ENCODE measurements at regions of chr3 and their contacts with region 1.

Region 1: GRCh38 chr3:142279965-142280590 is 54.7 kb upstream of the GK5 start:
- DNase-seq: peak; percentile 56
- H3K4me3 ChIP-seq: no peak overlapping the region
- H3K27ac ChIP-seq: no peak overlapping the region
- H3K4me1 ChIP-seq: no peaks in the 10 kb centered on the region
- H3K27me3 ChIP-seq: no peaks in the 10 kb centered on the region
- CTCF ChIP-seq: peak; percentile 60

Region 2: GRCh38 chr3:142129516-142130171 is 150.4 kb before region 1 on chr3:
- intact Hi-C with region 1: loop called (anchors 5 kb)
- DNase-seq: no peak
- H3K4me3 ChIP-seq: no peak overlapping the region
- H3K27ac ChIP-seq: no peak overlapping the region
- H3K4me1 ChIP-seq: no peaks in the 10 kb centered on the region
- H3K27me3 ChIP-seq: no peaks in the 10 kb centered on the region
- CTCF ChIP-seq: no peak

Region 3: GRCh38 chr3:142180761-142181362 is 99.2 kb before region 1 on chr3:
- intact Hi-C with region 1: loop called (anchors 2 kb)
- DNase-seq: peak; percentile 29
- H3K4me3 ChIP-seq: no peak overlapping the region
- H3K27ac ChIP-seq: no peak overlapping the region
- H3K4me1 ChIP-seq: no peaks in the 10 kb centered on the region
- H3K27me3 ChIP-seq: no peaks in the 10 kb centered on the region
- CTCF ChIP-seq: no peak

Region 4: GRCh38 chr3:142374687-142375086 is 94.6 kb after region 1 on chr3:
- intact Hi-C with region 1: no loop called
- DNase-seq: no peak
- H3K4me3 ChIP-seq: no peak overlapping the region
- H3K27ac ChIP-seq: no peak overlapping the region
- H3K4me1 ChIP-seq: no peaks in the 10 kb centered on the region
- H3K27me3 ChIP-seq: no peaks in the 10 kb centered on the region
- CTCF ChIP-seq: no peak

Measured in colonic mucosa (tissue), 4 donors.